Activated CD4-positive, alpha-beta T cell treated with anti-CD3 and anti-CD28 coated beads, Interleukin-2, amount 10 ng/mL, durations not matched to agents 7 days and 5 days (primary cell): ENCODE measurements at regions of chr3 and their contacts with region 1.

Region 1: GRCh38 chr3:5016218-5017161 is 37.3 kb downstream of the BHLHE40 start:
- DNase-seq: peak; percentile 52
- H3K4me3 Mint-ChIP-seq: no peak overlapping the region
- H3K27ac Mint-ChIP-seq: peak overlapping the region; percentile 71
- H3K4me1 Mint-ChIP-seq: peaks cover 89% of the 10 kb centered on the region
- H3K27me3 Mint-ChIP-seq: peaks cover 2% of the 10 kb centered on the region

Region 2: GRCh38 chr3:4986782-4987537 is 29.5 kb before region 1 on chr3:
- CTCF ChIA-PET with region 1: interaction called, 197 read pairs
- POLR2A ChIA-PET with region 1: interaction called, 12 read pairs
- DNase-seq: peak; percentile 80
- H3K4me3 Mint-ChIP-seq: peak overlapping the region; percentile 78
- H3K27ac Mint-ChIP-seq: peak overlapping the region; percentile 87
- H3K4me1 Mint-ChIP-seq: peaks cover 67% of the 10 kb centered on the region
- H3K27me3 Mint-ChIP-seq: no peaks in the 10 kb centered on the region

Region 3: GRCh38 chr3:4994823-4995499 is 21.5 kb before region 1 on chr3:
- CTCF ChIA-PET with region 1: interaction called, 19 read pairs
- POLR2A ChIA-PET with region 1: no interaction called
- DNase-seq: no peak
- H3K4me3 Mint-ChIP-seq: no peak overlapping the region
- H3K27ac Mint-ChIP-seq: no peak overlapping the region
- H3K4me1 Mint-ChIP-seq: peaks cover 17% of the 10 kb centered on the region
- H3K27me3 Mint-ChIP-seq: no peaks in the 10 kb centered on the region

Region 4: DNA sequence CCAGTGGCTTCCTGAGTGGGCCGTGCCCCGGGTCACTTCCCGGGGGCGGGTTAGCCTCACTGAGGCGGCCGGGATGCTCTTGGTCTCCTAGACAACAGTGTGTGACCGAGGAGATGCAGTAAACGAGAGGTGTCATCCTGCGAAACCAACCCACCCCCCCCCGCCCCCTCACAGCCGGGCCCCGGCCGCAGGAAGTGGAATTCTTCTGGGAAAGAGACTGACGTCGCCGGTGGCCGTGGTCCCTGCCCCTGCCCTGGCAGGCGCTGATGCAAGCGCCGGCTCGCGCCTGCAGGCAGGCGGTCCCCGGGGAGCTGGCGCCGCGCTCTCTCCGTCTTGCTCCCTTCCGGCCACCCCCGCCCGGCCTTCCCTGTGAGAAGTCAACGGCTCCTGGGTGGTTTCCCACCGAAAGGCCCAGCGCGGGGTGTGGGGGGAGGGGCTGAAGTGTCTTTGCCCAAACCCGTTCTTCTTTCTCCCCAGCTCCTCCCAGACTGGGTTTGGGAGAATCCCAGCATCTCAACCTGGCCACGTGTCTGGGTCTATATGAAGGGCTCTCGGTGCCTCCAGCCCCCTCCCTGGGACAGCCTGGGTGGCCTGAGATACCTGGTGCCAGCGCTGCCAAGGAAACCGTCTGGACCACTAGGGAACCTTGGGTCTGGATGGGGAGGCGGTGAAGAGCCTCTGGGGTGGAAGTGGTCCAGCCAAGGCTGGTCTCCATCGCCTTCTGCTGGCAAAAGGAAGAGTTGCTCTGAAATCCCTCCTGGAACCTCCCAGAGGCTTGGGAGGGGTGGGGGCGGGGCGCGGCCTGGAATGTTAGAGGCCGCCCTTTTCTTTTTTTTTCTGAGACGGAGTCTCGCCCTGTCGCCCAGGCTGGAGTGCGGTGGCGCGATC is 10.1 kb after region 1 on chr3:
- CTCF ChIA-PET with region 1: interaction called, 24 read pairs
- POLR2A ChIA-PET with region 1: no interaction called
- DNase-seq: peak; percentile 63
- H3K4me3 Mint-ChIP-seq: peak overlapping the region; percentile 74
- H3K27ac Mint-ChIP-seq: peak overlapping the region; percentile 85
- H3K4me1 Mint-ChIP-seq: peaks cover 42% of the 10 kb centered on the region
- H3K27me3 Mint-ChIP-seq: peaks cover 2% of the 10 kb centered on the region